IMR-90 (cell line): ENCODE measurements at regions of chr17 and their contacts with region 1.

Region 1: DNA sequence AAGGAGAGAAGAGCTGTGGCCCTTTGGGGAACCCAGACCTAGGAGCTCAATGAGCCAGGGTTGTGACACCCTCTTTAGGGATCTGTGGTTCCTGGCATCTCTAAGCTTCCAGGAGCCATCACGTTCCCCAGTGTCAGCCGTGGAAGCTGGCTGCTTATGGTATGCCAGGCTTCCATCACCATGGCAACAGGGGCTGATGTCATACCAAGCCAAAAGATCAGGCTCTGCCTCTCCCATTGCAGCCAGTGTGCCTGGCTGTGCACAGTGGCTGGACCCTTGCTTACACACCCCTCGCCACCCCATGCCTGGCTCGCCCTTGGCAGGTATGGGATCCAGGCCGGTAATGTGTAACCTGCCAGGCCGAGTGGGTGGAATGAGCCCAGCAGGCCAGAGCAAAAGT is 91.1 kb downstream of the SSH2 start:
- DNase-seq: peak; percentile 44
- ATAC-seq: peak; percentile 31
- H3K4me3 ChIP-seq: no peak overlapping the region
- H3K27ac ChIP-seq: no peak overlapping the region
- H3K4me1 ChIP-seq: peaks cover 8% of the 10 kb centered on the region
- H3K27me3 ChIP-seq: no peaks in the 10 kb centered on the region
- CTCF ChIP-seq: no peak
- POLR2A ChIP-seq: no peak
- RAD21 ChIP-seq: no peak

Region 2: GRCh38 chr17:29891131-29891530 is 52.2 kb after region 1 on chr17:
- CTCF ChIA-PET with region 1: no interaction called
- POLR2A ChIA-PET with region 1: no interaction called
- dilution Hi-C with region 1: no loop called
- in situ Hi-C with region 1: no loop called
- intact Hi-C with region 1: no loop called
- DNase-seq: no peak
- ATAC-seq: no peak
- H3K4me3 ChIP-seq: no peak overlapping the region
- H3K27ac ChIP-seq: no peak overlapping the region
- H3K4me1 ChIP-seq: no peaks in the 10 kb centered on the region
- H3K27me3 ChIP-seq: no peaks in the 10 kb centered on the region
- CTCF ChIP-seq: no peak
- POLR2A ChIP-seq: no peak
- RAD21 ChIP-seq: no peak

Region 3: DNA sequence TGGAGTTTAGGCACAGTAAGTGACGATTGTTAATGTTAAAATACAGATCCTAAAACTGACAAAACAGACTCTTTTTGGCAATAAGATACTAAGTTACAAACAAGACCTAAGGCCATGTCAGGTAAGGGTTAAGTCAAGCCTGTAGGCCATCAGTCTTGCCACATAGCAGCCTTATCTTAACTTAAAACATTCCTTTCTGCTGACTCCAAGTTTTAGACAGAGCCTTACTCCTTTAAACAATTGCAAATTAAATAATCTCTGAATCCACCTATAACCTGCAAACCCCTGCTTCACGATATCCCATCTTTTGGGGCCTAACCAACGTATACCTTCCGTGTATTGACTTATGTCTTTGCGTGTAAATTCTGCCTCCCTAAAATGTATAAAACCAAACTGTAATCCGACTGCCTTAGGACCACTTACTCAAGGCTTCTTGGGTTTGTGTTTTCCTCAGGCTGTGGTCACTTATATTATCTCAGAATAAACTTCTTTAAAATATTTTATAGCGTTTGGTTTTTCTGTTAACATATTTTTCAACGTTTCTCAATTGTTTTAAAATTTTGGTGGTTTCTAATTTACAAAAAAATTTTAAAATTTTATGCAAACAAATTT is 166.9 kb after region 1 on chr17:
- CTCF ChIA-PET with region 1: no interaction called
- POLR2A ChIA-PET with region 1: interaction called, 15 read pairs
- dilution Hi-C with region 1: no loop called
- in situ Hi-C with region 1: no loop called
- intact Hi-C with region 1: no loop called
- DNase-seq: peak; percentile 33
- ATAC-seq: peak; percentile 77
- H3K4me3 ChIP-seq: no peak overlapping the region
- H3K27ac ChIP-seq: no peak overlapping the region
- H3K4me1 ChIP-seq: peaks cover 7% of the 10 kb centered on the region; the same call in 1 of the 2 replicates
- H3K27me3 ChIP-seq: no peaks in the 10 kb centered on the region
- CTCF ChIP-seq: no peak
- POLR2A ChIP-seq: no peak
- RAD21 ChIP-seq: no peak